Ascending aorta (tissue), 2 donors: ENCODE measurements at regions of chr1 and their contacts with region 1.

Region 1: GRCh38 chr1:156096640-156097391 is 14.6 kb upstream of the MEX3A start:
- DNase-seq: peak; percentile 76 to 96
- H3K4me3 ChIP-seq: peak overlapping the region; percentile 30 to 32
- H3K27ac ChIP-seq: peak overlapping the region; percentile 93 to 96
- H3K4me1 ChIP-seq: peaks cover 13 to 25% of the 10 kb centered on the region in 2 donors
- H3K27me3 ChIP-seq: no peaks in the 10 kb centered on the region
- CTCF ChIP-seq: peak; percentile 96 to 99 (median 99)

Region 2: GRCh38 chr1:156114101-156114916 is 17.5 kb after region 1 on chr1 and contains the start of gene LMNA:
- intact Hi-C with region 1: loop called (anchors 1 kb)
- DNase-seq: peak; percentile 90 to 98
- H3K4me3 ChIP-seq: peak within 1 kb of the TSS; percentile 93 to 100
- H3K27ac ChIP-seq: peak within 1 kb of the TSS; percentile 97
- H3K4me1 ChIP-seq: peaks cover 6 to 21% of the 10 kb centered on the region in 2 donors
- H3K27me3 ChIP-seq: no peaks in the 10 kb centered on the region
- CTCF ChIP-seq: no peak
- total RNA-seq, gene LMNA: 783 TPM

Region 3: GRCh38 chr1:156129706-156130581 is 33.1 kb after region 1 on chr1:
- intact Hi-C with region 1: loop called (anchors 1 kb)
- DNase-seq: peak; percentile 66 to 97
- H3K4me3 ChIP-seq: peak overlapping the region; percentile 46 to 93
- H3K27ac ChIP-seq: peak overlapping the region; percentile 97
- H3K4me1 ChIP-seq: peaks cover 32 to 52% of the 10 kb centered on the region in 2 donors
- H3K27me3 ChIP-seq: no peaks in the 10 kb centered on the region
- CTCF ChIP-seq: peak; percentile 96 to 98 (median 96)

Region 4: DNA sequence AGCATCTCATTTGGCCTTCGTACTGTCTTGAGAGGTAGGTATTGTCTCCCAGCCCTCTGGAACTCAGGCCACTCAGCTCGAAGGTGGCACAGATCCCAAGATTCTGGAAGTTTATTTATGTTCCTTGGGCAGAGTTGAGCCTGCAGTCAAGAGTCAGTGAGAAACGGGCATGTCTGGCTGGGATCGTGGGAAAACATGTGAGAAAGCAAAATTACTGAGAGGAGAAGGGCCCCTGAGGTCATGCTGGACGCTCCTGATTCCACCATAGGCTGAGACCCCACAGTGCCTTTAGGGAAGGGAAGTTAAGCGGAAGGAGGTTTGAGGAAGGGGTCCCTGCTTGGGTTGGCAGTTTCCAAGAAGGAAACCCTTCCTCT is 44.0 kb after region 1 on chr1:
- intact Hi-C with region 1: loop called (anchors 2 kb)
- DNase-seq: peak in 1 of 2 donors; percentile 81
- H3K4me3 ChIP-seq: no peak overlapping the region
- H3K27ac ChIP-seq: peak overlapping the region; percentile 73 to 81
- H3K4me1 ChIP-seq: peaks cover 8 to 21% of the 10 kb centered on the region in 2 donors
- H3K27me3 ChIP-seq: no peaks in the 10 kb centered on the region
- CTCF ChIP-seq: no peak

Region 5: GRCh38 chr1:156212833-156213643 is 116.2 kb after region 1 on chr1 and contains the start of gene PMF1:
- intact Hi-C with region 1: loop called (anchors 5 kb)
- DNase-seq: peak; percentile 93 to 99
- H3K4me3 ChIP-seq: peak within 1 kb of the TSS; percentile 74 to 82
- H3K27ac ChIP-seq: peak within 1 kb of the TSS; percentile 89 to 96
- H3K4me1 ChIP-seq: peaks cover 5 to 24% of the 10 kb centered on the region in 2 donors
- H3K27me3 ChIP-seq: no peaks in the 10 kb centered on the region
- CTCF ChIP-seq: no peak
- total RNA-seq, gene PMF1: 61.4 TPM